ENCODE measurements at regions of chr22 and their contacts with region 1.

Region 1: GRCh38 chr22:29154364-29155048 is 51.2 kb upstream of the EMID1 start:
- DNase-seq: peak; percentile 84 to 87 (median 85)
- ATAC-seq: peak; percentile 87 to 92 (median 90)
- H3K4me3 ChIP-seq: peak overlapping the region in 1 of 3 donors; percentile 31
- H3K27ac ChIP-seq: no peak overlapping the region
- H3K4me1 ChIP-seq: peaks cover 0 to 5% (median 0%) of the 10 kb centered on the region in 4 donors
- H3K27me3 ChIP-seq: no peaks in the 10 kb centered on the region
- CTCF ChIP-seq: peak; percentile 91 to 97 (median 94)
- POLR2A ChIP-seq: no peak

Region 2: GRCh38 chr22:28855355-28856094 is 299.0 kb before region 1 on chr22:
- intact Hi-C with region 1: loop called in 1 of 2 experiments (anchors 10 kb)
- DNase-seq: no peak
- ATAC-seq: peak; percentile 83 to 91 (median 90)
- H3K4me3 ChIP-seq: no peak overlapping the region
- H3K27ac ChIP-seq: no peak overlapping the region
- H3K4me1 ChIP-seq: peaks cover 0 to 23% (median 0%) of the 10 kb centered on the region in 4 donors
- H3K27me3 ChIP-seq: no peaks in the 10 kb centered on the region
- CTCF ChIP-seq: peak; percentile 85 to 97 (median 90)
- POLR2A ChIP-seq: no peak

Region 3: GRCh38 chr22:29055192-29055830 is 99.2 kb before region 1 on chr22:
- intact Hi-C with region 1: loop called in 1 of 2 experiments (anchors 10 kb)
- DNase-seq: no peak
- ATAC-seq: no peak
- H3K4me3 ChIP-seq: no peak overlapping the region
- H3K27ac ChIP-seq: peak overlapping the region in 1 of 3 donors; percentile 16
- H3K4me1 ChIP-seq: peaks cover 0 to 7% (median 3%) of the 10 kb centered on the region in 4 donors
- H3K27me3 ChIP-seq: no peaks in the 10 kb centered on the region
- CTCF ChIP-seq: no peak
- POLR2A ChIP-seq: no peak